CD14-positive monocyte (primary cell): ENCODE measurements at regions of chr6 and their contacts with region 1.

Region 1: GRCh38 chr6:42028234-42029061 is 21.9 kb upstream of the TAF8 start:
- DNase-seq: peak; percentile 67 to 89 (median 82)
- H3K4me3 ChIP-seq: peak overlapping the region; percentile 5 to 68 (median 11)
- H3K4me3 Mint-ChIP-seq: peak overlapping the region; percentile 74 to 88
- H3K27ac ChIP-seq: peak overlapping the region; percentile 81 to 86
- H3K27ac Mint-ChIP-seq: peak overlapping the region; percentile 94 to 98 (median 95)
- H3K4me1 ChIP-seq: peaks cover 86 to 89% of the 10 kb centered on the region in 2 donors
- H3K4me1 Mint-ChIP-seq: peaks cover 88% of the 10 kb centered on the region
- H3K27me3 ChIP-seq: no peaks in the 10 kb centered on the region
- H3K27me3 Mint-ChIP-seq: no peaks in the 10 kb centered on the region
- CTCF ChIP-seq: no peak

Region 2: DNA sequence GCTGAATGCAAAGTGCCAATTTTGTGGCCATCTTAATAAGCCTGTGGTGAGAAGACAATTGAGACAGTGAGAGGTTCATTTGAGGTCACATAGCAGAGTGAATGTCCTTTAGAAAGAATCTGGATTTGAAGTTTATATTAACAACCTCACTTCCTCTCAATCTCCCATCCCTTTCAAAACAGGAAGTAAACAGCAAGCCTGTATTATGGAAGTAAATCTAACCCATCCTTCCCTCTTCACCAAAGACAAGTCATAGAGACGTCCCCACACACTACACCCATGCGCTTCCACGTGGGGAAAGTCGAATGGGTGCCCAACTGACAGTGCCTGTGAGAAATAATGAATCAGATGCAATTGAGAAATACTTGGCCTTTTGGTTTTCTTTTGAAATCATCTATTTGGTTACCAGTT is 58.0 kb before region 1 on chr6:
- intact Hi-C with region 1: loop called in 1 of 2 experiments (anchors 5 kb)
- DNase-seq: peak; percentile 92 to 97 (median 95)
- H3K4me3 ChIP-seq: no peak overlapping the region
- H3K4me3 Mint-ChIP-seq: peak overlapping the region in 1 of 2 donors; percentile 31
- H3K27ac ChIP-seq: peak overlapping the region; percentile 50 to 74
- H3K27ac Mint-ChIP-seq: peak overlapping the region; percentile 88 to 98 (median 95)
- H3K4me1 ChIP-seq: peaks cover 33 to 38% of the 10 kb centered on the region in 2 donors
- H3K4me1 Mint-ChIP-seq: peaks cover 37% of the 10 kb centered on the region
- H3K27me3 ChIP-seq: no peaks in the 10 kb centered on the region
- H3K27me3 Mint-ChIP-seq: peaks cover 0 to 2% (median under 1%) of the 10 kb centered on the region in 3 donors
- CTCF ChIP-seq: no peak